Cardiac septum (tissue), 1 donor: ENCODE measurements at regions of chr15 and their contacts with region 1.

Region 1: GRCh38 chr15:76330080-76330680 is 6.4 kb upstream of the ISL2 start:
- DNase-seq: no peak

Region 2: GRCh38 chr15:76217029-76217428 is 113.2 kb before region 1 on chr15:
- intact Hi-C with region 1: no loop called
- DNase-seq: no peak

Region 3: GRCh38 chr15:76239786-76240185 is 90.4 kb before region 1 on chr15:
- intact Hi-C with region 1: loop called (anchors 2 kb)
- DNase-seq: no peak

Region 4: GRCh38 chr15:76376029-76376428 is 45.8 kb after region 1 on chr15:
- intact Hi-C with region 1: no loop called
- DNase-seq: no peak